Heart left ventricle (tissue), 16 donors: ENCODE measurements at regions of chr4 and their contacts with region 1.

Region 1: DNA sequence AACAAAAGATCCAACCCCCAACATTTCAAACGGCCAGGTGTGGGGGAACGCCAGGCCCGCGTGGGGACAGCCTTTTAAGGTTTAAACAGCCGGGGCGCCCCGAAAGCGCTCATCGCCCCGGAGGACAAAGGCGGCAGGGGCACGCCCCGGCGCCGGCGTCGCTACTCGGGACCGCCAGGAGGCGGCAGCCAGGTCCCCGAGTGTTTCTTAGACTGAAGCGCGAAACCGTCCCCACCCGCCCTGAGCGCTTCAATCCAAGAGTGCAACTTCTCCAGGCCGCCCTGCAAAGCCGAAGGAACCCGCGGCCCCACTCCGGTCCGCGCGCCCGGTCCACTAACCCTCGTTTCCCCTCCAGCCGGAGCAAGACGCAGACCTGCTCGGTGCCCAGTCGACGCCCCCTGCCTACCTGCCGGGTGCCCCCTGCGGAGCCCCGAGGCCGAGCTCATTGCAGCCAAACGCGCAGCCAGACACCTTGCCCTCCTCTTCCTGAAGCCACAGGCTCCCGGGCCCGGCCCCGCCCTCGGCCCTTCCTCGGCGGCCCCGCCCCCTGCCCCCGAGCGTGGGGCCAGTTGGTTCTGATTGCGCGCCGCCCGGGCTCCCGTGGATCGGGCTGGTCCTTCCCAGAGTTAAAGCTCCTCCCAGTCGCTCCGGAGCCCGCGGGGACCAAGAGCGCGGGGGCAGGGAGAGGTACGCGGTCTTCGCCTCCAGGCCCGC is at the start of gene CASP6:
- DNase-seq: peak; percentile 87 to 93 (median 87)
- ATAC-seq: peak; percentile 85 to 97 (median 96)
- H3K4me3 ChIP-seq: peak within 1 kb of the TSS; percentile 59 to 97 (median 76)
- H3K27ac ChIP-seq: peak within 1 kb of the TSS; percentile 40 to 90 (median 85)
- H3K4me1 ChIP-seq: peaks cover 0 to 21% (median 16%) of the 10 kb centered on the region in 12 donors
- H3K27me3 ChIP-seq: no peaks in the 10 kb centered on the region
- CTCF ChIP-seq: peak; percentile 53 to 82 (median 68)
- POLR2A ChIP-seq: peak in 1 of 2 donors; percentile 54
- total RNA-seq, gene CASP6: 3.5 to 16.4 (median 6.5) TPM

Region 2: DNA sequence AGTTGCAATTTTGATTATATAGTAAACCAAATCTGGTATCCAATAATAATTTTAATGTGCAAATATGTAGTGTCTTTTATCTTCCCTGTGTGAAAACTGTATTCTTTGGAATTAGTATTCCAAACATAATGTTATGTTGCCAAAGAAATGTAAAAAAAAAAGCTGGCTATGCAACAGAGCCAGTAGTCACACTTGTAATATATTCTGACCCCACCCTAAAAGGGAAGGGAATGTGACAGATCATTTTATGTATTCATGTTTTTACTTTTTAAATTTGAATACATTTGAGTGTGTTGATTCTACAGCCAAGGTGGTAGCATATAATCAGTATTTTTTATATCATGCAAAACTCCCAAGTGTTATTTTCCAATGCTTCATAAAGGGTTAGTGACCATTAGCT is 170.9 kb before region 1 on chr4:
- intact Hi-C with region 1: no loop called
- DNase-seq: no peak
- ATAC-seq: no peak
- H3K4me3 ChIP-seq: no peak overlapping the region
- H3K27ac ChIP-seq: no peak overlapping the region
- H3K4me1 ChIP-seq: no peaks in the 10 kb centered on the region
- H3K27me3 ChIP-seq: no peaks in the 10 kb centered on the region
- CTCF ChIP-seq: no peak
- POLR2A ChIP-seq: no peak

Region 3: DNA sequence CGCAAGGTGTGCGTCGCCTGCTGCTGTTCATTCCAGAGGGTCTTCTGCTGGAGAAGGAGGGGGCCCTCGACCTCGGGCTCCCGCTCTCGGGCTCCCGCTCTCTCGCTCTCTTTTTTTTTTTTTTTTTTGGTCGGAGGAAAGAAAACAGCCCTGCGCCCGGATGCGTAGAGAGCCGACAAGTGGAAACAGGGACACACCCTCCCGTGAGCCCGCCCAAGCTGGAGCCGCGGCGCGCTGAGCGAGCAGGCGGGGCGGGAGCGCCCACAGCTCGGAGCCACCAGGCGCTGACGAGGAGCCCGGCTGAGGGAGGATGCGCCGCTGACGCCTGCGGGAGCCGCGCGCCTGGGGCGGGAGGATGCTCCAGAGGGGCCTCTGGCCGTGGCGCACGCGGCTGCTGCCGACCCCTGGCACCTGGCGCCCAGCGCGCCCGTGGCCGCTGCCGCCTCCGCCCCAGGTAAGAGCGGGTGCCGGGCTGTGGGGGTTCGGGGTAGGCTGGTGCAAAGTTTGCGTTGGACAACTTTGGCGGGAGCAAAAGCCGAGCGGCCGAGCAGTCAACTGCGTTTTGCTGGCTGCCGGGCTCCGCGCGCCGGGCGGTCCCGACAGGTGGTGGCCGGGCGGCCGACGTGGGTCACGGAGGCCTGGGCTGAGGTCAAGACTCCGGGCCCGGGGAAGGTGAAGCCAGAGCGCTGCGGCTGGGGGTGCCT is 143.0 kb before region 1 on chr4 and contains the start of gene MCUB:
- intact Hi-C with region 1: loop called in 1 of 10 experiments (anchors 10 kb)
- DNase-seq: peak; percentile 85 to 94 (median 88)
- ATAC-seq: peak; percentile 84 to 99 (median 98)
- H3K4me3 ChIP-seq: peak within 1 kb of the TSS; percentile 50 to 95 (median 78)
- H3K27ac ChIP-seq: peak within 1 kb of the TSS; percentile 33 to 95 (median 82)
- H3K4me1 ChIP-seq: peaks cover 0 to 31% (median 7%) of the 10 kb centered on the region in 12 donors
- H3K27me3 ChIP-seq: peaks cover 0 to 7% (median 0%) of the 10 kb centered on the region in 9 donors
- CTCF ChIP-seq: no peak
- POLR2A ChIP-seq: peak in 1 of 2 donors; percentile 37
- total RNA-seq, gene MCUB: 2.6 to 15.1 (median 4.7) TPM

Region 4: GRCh38 chr4:109729718-109730618 is 26.9 kb after region 1 on chr4 and contains the start of gene PLA2G12A:
- intact Hi-C with region 1: loop called in 1 of 10 experiments (anchors 1 kb)
- DNase-seq: peak; percentile 66 to 83 (median 70)
- ATAC-seq: peak; percentile 84 to 97 (median 94)
- H3K4me3 ChIP-seq: peak within 1 kb of the TSS; percentile 78 to 98 (median 92)
- H3K27ac ChIP-seq: peak within 1 kb of the TSS; percentile 8 to 90 (median 76)
- H3K4me1 ChIP-seq: peaks cover 0 to 20% (median 12%) of the 10 kb centered on the region in 12 donors
- H3K27me3 ChIP-seq: no peaks in the 10 kb centered on the region
- CTCF ChIP-seq: no peak
- POLR2A ChIP-seq: peak in 1 of 2 donors; percentile 64
- total RNA-seq, gene PLA2G12A: 32.6 to 68.5 (median 58.5) TPM

Region 5: DNA sequence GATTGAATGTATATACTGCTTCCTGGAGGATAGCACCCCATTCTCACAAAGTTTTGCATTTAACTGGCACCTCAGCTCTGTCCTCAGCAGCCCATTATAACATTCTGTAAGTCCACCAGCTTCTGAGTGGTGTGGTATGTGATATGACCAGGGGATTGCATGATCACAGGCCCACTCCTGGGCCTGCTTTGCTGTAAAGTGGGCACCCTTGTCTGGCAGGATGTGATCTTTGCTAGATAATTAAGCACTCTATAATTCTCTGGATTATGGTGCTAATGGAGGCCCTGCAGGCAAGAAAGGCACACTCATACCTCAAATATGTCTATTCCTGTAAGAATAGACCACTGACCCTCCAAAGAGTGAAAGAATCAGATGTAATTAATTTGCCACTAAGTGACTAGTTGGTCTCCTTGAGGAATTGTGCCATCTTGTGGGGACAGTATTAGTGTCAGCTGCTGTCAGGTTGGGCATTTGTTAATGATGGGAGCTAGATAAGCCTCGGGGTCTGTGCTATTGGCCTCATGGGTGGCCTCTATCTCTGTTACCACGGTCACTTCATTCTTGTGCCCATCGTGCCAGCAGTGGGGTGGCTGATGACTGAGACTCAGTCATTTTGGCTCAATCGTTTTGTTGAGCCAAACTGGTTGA is 100.9 kb after region 1 on chr4:
- intact Hi-C with region 1: loop called in 1 of 10 experiments (anchors 2 kb)
- DNase-seq: no peak
- ATAC-seq: peak in 1 of 4 donors; percentile 61
- H3K4me3 ChIP-seq: no peak overlapping the region
- H3K27ac ChIP-seq: no peak overlapping the region
- H3K4me1 ChIP-seq: peaks cover 0 to 7% (median 0%) of the 10 kb centered on the region in 12 donors
- H3K27me3 ChIP-seq: no peaks in the 10 kb centered on the region
- CTCF ChIP-seq: peak in 8 of 12 donors; percentile 17 to 47 (median 36)
- POLR2A ChIP-seq: no peak

Region 6: DNA sequence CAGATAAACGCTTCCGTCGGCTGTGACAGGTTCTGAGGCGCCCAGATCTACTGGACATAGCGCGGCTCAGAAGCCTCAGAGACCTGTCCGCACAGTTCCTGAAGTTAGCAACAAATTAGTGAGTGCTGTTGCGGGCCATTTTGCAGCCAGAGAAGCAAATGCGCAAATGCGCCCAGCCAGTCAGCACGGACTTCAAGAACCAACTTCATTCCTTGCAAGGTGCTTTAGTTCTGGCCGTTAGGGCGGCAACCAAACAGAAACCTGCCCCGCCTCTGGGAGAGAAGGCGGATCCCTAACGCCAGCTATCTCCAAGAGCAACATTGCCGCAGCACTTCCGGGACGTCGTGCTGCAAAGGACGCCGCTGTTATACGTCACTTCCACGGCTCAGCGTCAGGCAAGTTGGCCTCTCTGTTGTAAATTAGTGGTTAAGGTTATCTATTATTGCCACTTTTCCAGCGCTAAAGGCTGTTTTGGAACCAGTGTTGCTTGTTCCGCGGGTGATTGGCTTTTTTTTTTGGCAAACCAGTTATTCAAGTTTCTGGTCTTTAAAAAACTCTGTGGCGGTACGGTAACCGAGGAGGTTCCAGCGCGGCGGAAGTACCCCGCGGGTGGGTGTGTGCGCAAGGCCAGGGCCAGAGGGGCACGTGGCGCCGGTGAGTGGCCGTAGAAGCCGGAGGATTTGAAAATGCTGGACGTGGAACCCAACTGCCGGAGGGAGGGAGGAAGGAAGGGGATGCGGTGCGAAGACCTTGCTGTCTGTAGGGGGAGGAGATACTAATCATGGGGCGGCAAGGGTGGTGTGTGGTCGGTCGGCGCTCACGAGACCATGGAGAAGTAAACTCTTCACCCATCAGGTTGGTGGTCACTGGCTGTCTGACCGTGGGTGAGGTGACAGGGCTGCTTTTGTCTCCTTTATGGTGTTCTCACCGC is 112.3 kb after region 1 on chr4 and contains the start of gene GAR1:
- intact Hi-C with region 1: loop called (anchors 2 to 10 kb)
- DNase-seq: peak; percentile 87 to 93 (median 90)
- ATAC-seq: peak; percentile 99 to 100 (median 100)
- H3K4me3 ChIP-seq: peak within 1 kb of the TSS; percentile 71 to 92 (median 80)
- H3K27ac ChIP-seq: peak within 1 kb of the TSS; percentile 39 to 93 (median 84)
- H3K4me1 ChIP-seq: peaks cover 0 to 21% (median 13%) of the 10 kb centered on the region in 12 donors
- H3K27me3 ChIP-seq: no peaks in the 10 kb centered on the region
- CTCF ChIP-seq: peak in 1 of 12 donors; percentile 16
- POLR2A ChIP-seq: peak in 1 of 2 donors; percentile 48
- total RNA-seq, gene GAR1: 3.2 to 10.9 (median 8.5) TPM

Region 7: DNA sequence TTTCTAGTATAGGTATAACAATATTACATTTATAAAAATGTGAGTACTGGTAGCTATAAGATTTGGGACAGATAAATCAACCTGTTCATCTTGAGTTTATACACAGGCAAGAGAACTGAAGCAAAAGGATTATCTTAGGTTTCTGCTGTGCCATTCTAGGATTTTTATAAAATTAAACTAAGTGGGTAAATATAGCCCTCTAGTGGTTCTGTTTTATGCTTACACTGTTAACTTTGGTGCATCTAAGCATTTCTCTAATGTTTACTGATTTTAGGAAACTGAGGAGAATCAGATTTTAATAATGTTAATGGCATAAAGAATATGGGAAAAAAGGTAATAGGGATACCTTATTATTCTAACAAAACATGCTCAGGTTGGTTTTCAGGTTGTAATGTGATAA is 123.6 kb after region 1 on chr4:
- intact Hi-C with region 1: loop called in 2 of 10 experiments (anchors 10 kb)
- DNase-seq: no peak
- ATAC-seq: no peak
- H3K4me3 ChIP-seq: no peak overlapping the region
- H3K27ac ChIP-seq: no peak overlapping the region
- H3K4me1 ChIP-seq: no peaks in the 10 kb centered on the region
- H3K27me3 ChIP-seq: no peaks in the 10 kb centered on the region
- CTCF ChIP-seq: peak; percentile 44 to 66 (median 54)
- POLR2A ChIP-seq: no peak

Region 8: GRCh38 chr4:109977854-109978501 is 274.9 kb after region 1 on chr4:
- intact Hi-C with region 1: loop called in 6 of 10 experiments (anchors 5 to 10 kb)
- DNase-seq: no peak
- ATAC-seq: no peak
- H3K4me3 ChIP-seq: no peak overlapping the region
- H3K27ac ChIP-seq: no peak overlapping the region
- H3K4me1 ChIP-seq: peaks cover 0 to 12% (median 0%) of the 10 kb centered on the region in 12 donors
- H3K27me3 ChIP-seq: no peaks in the 10 kb centered on the region
- CTCF ChIP-seq: peak; percentile 45 to 79 (median 66)
- POLR2A ChIP-seq: no peak